Activated CD4-positive, alpha-beta T cell treated with anti-CD3 and anti-CD28 coated beads for 36 hours (primary cell): ENCODE measurements at regions of chr2 and their contacts with region 1.

Region 1: DNA sequence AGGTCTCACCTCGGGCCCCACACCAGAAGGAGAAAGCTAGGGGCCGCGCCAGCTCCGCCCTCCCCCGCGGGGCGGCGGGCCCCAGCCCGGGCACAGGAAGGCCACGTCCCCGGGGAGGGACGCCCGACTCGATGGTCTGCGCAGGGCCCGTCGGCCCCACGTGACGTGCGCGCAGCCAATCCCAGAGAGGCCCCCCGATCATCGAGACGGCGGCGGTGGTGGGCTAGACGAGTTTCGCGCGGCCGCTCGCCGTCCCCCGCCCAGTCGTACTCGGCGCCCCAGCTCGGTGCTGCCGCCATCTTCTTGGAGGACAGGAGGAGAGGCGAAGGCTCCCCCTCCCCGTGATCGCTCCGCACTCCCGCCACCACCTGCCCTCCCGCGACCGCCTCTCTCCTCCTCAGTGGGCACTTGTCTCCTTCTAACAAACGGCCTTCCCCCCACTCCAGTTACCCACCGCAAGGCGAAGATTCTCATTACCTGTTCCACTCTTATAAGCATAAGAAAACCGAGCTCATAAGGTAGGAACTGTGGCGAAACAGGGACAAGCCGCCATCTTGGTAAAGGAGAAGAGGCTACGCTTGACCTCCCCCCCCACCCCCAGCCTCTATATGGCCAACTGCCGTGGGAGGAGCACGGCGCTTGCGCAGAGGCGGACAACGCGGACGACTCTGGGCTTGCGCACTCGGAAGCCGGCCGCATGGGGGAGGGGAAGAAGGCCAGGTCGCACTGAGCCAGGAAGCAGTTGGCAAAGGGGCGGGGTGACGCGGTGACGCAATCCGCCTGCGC is at the start of gene HDLBP:
- DNase-seq: peak; percentile 100
- ATAC-seq: peak; percentile 84
- H3K4me3 Mint-ChIP-seq: peak within 1 kb of the TSS; percentile 100
- H3K27ac Mint-ChIP-seq: peak within 1 kb of the TSS; percentile 100
- H3K4me1 Mint-ChIP-seq: peaks cover 70% of the 10 kb centered on the region
- H3K27me3 Mint-ChIP-seq: no peaks in the 10 kb centered on the region
- total RNA-seq, gene HDLBP: 259 to 348 TPM

Region 2: DNA sequence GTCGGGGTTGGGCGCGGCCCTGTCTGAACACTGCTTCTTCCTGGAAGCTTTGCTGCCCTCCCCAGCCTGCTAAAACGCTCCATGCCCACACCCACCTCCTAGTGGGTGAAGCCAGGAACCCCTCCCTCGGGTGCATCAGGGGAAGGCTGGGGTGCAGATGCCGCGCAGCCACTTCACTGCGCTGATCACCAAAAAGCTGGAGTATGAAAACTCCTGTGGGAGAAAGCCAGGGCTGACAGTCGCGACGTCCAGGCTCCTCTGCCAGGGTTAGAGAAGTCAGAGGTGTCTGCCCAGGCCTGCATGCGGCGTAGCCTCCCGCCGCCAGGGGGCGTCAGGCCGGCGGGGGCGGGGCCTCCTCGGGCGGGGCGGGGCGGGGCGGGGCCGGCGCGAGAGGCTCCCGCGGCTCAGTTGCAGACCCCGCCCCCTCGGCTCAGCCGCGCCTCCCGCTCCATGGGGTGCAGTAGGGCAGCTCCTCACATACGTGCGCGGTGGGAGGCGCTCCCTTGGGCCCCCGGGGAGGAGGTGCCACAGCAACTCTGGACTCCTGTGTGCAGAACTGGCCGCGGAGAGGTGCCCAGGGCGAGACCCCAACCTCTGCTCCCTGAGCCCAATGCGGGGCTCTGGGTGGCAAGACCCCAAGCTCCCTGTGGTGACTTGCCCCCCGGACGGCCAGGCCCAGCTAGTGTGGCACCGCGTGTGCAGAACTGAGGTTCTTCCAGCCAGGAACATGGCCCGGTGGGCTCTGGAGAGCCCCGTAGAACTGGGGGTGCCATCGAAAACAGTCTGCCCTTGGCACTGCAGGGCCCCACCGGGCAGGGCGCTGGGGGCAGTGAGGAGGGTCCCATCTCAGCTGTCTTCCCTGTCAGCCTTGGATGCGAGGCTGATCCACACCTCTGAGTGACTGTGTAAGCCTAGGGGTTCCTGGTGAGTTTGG is 748.8 kb before region 1 on chr2:
- CTCF ChIA-PET with region 1: no interaction called
- POLR2A ChIA-PET with region 1: no interaction called
- intact Hi-C with region 1: loop called (anchors 1 to 5 kb)
- DNase-seq: peak; percentile 98
- ATAC-seq: peak; percentile 67
- H3K4me3 Mint-ChIP-seq: peak overlapping the region; percentile 87
- H3K27ac Mint-ChIP-seq: peak overlapping the region; percentile 98
- H3K4me1 Mint-ChIP-seq: peaks cover 65% of the 10 kb centered on the region
- H3K27me3 Mint-ChIP-seq: no peaks in the 10 kb centered on the region

Region 3: GRCh38 chr2:241149925-241150659 is 165.2 kb before region 1 on chr2 and contains the start of gene PPP1R7:
- CTCF ChIA-PET with region 1: interaction called, 3 read pairs
- POLR2A ChIA-PET with region 1: no interaction called
- intact Hi-C with region 1: loop called (anchors 1 kb)
- DNase-seq: peak; percentile 98
- ATAC-seq: peak; percentile 79
- H3K4me3 Mint-ChIP-seq: peak within 1 kb of the TSS; percentile 88
- H3K27ac Mint-ChIP-seq: peak within 1 kb of the TSS; percentile 91
- H3K4me1 Mint-ChIP-seq: peaks cover 51% of the 10 kb centered on the region
- H3K27me3 Mint-ChIP-seq: no peaks in the 10 kb centered on the region
- total RNA-seq, gene PPP1R7: 104 to 129 TPM

Region 4: GRCh38 chr2:241355983-241356870 is 40.9 kb after region 1 on chr2 and contains the start of gene FARP2:
- CTCF ChIA-PET with region 1: no interaction called
- POLR2A ChIA-PET with region 1: interaction called, 4 read pairs
- intact Hi-C with region 1: loop called (anchors 1 kb)
- DNase-seq: peak; percentile 99
- ATAC-seq: peak; percentile 95
- H3K4me3 Mint-ChIP-seq: peak within 1 kb of the TSS; percentile 73
- H3K27ac Mint-ChIP-seq: peak within 1 kb of the TSS; percentile 80
- H3K4me1 Mint-ChIP-seq: peaks cover 48% of the 10 kb centered on the region
- H3K27me3 Mint-ChIP-seq: no peaks in the 10 kb centered on the region
- total RNA-seq, gene FARP2: 29.0 to 30.7 TPM

Region 5: DNA sequence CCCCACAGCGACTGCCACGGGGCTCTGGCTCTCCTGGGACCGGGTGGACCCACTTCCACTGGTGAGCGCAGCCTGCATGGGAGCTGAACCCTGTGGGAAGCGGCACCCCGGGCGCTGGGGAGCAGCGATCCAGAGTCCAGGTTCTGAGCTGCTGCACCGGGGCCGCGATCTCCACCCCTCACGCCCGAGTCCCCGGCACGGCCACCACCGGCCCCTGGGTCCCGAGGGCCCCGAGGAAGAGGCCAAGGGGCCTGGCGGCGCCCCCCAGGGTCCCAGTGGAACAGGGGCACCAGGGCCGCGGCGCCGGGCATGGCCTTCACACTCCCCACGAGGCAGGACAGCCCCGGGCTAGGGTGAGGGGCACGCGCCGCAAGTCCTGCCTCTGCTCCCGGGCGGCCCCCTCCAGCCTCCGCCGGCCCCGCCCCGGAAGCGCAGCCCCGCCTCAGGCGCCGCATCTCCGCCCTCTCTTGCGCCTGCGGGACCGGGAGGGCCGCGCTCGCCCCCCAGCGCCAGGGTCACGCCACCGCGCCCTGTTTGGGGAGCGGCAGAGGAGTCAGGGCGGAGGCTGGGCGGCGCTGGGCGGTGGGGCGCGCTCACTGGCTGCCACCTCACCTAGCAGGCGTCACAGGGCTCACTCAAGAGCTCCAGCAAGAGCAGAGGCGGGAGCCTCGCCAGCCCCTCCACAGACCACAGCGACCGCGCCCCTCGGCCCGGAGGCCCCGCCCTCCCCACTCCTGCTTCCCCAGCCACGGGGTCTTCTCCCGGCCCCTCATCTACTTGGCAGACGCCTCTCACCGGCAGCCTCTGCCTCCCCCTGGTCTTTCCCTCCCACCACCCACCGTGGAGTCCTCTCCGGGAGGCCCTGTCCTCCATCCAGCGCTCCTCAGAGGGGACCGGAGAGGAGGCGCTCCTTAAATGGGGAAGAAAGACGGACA is 294.8 kb after region 1 on chr2:
- CTCF ChIA-PET with region 1: no interaction called
- POLR2A ChIA-PET with region 1: no interaction called
- intact Hi-C with region 1: loop called in 1 of 2 experiments (anchors 1 kb)
- DNase-seq: peak; percentile 96
- ATAC-seq: peak; percentile 100
- H3K4me3 Mint-ChIP-seq: peak overlapping the region; percentile 48
- H3K27ac Mint-ChIP-seq: peak overlapping the region; percentile 67
- H3K4me1 Mint-ChIP-seq: peaks cover 14% of the 10 kb centered on the region
- H3K27me3 Mint-ChIP-seq: no peaks in the 10 kb centered on the region

Region 6: DNA sequence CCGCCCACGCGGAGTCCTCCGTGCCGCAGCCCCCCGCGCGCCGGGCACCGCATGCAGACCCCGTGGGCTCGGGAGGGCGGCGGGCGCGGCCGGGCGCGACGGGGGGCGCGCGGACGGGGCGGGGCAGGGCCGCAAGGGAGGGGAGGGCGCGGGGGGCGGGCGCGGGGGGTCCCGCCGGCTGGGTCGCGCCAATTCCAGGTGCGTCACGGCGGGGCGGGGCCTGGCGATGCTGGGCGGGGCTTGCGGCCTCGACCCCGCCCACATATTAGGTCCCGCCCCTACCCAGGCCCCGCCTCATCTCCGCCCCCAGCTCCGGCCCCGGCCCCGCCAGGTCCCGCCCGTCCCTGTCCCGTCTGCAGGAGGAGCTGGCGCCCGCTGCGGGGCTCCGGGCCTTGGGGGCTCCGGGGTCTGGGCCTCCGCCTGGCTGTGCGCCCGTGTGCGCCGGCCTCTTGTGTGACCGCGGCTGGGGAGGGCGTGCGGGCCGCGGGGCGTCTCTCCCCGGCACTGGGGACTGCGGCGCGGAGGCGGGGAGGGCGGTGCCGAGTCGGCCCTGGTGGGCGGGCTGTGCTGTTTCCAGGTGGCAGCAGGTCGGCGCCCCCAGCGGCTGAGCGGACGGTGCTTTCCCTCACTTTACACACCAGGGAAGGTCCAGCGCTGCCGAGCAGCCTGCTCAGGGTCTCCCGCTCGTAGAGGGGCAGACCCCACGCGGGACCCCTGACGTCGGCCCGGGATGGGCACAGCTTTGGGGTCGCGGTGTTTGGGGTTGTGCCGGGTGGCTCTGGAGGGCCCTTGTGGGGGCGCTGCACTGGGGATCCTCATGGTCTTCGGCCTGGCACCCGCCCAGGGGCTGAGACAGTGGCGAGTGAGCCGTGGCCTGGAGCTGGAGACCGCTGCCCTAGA is 387.1 kb after region 1 on chr2:
- CTCF ChIA-PET with region 1: interaction called, 3 read pairs
- POLR2A ChIA-PET with region 1: no interaction called
- intact Hi-C with region 1: loop called in 1 of 2 experiments (anchors 1 kb)
- DNase-seq: peak; percentile 94
- ATAC-seq: peak; percentile 70
- H3K4me3 Mint-ChIP-seq: peak overlapping the region; percentile 86
- H3K27ac Mint-ChIP-seq: peak overlapping the region; percentile 75
- H3K4me1 Mint-ChIP-seq: peaks cover 29% of the 10 kb centered on the region
- H3K27me3 Mint-ChIP-seq: no peaks in the 10 kb centered on the region